A549 (cell line): ENCODE measurements at regions of chr6 and their contacts with region 1.

Region 1: GRCh38 chr6:44475779-44476434 is 88.4 kb downstream of the CDC5L start:
- DNase-seq: peak; percentile 67 to 76
- ATAC-seq: peak; percentile 89 to 98
- H3K4me3 ChIP-seq: no peak overlapping the region
- H3K27ac ChIP-seq: peak overlapping the region; percentile 57 to 85; a peak in 5 of 6 replicates
- H3K4me1 ChIP-seq: peaks cover 16% of the 10 kb centered on the region; the same call in 2 of the 3 replicates
- CTCF ChIP-seq: peak; percentile 82
- EP300 ChIP-seq: no peak
- POLR2A ChIP-seq: no peak
- RAD21 ChIP-seq: peak; percentile 92 to 95

Region 2: GRCh38 chr6:44464527-44465310 is 11.2 kb before region 1 on chr6:
- CTCF ChIA-PET with region 1: interaction called, 85 read pairs
- POLR2A ChIA-PET with region 1: no interaction called
- DNase-seq: no peak
- ATAC-seq: no peak
- H3K4me3 ChIP-seq: no peak overlapping the region
- H3K27ac ChIP-seq: no peak overlapping the region
- H3K4me1 ChIP-seq: no peaks in the 10 kb centered on the region
- CTCF ChIP-seq: no peak
- EP300 ChIP-seq: no peak
- POLR2A ChIP-seq: no peak
- RAD21 ChIP-seq: no peak

Region 3: GRCh38 chr6:44496665-44497369 is 20.9 kb after region 1 on chr6:
- CTCF ChIA-PET with region 1: interaction called, 22 read pairs
- POLR2A ChIA-PET with region 1: no interaction called
- DNase-seq: no peak
- ATAC-seq: no peak
- H3K4me3 ChIP-seq: no peak overlapping the region
- H3K27ac ChIP-seq: no peak overlapping the region
- H3K4me1 ChIP-seq: peaks cover 19% of the 10 kb centered on the region
- CTCF ChIP-seq: no peak
- EP300 ChIP-seq: no peak
- POLR2A ChIP-seq: no peak
- RAD21 ChIP-seq: no peak

Region 4: GRCh38 chr6:44630125-44631028 is 154.5 kb after region 1 on chr6:
- CTCF ChIA-PET with region 1: interaction called, 59 read pairs
- POLR2A ChIA-PET with region 1: no interaction called
- DNase-seq: peak; percentile 42 to 59
- ATAC-seq: peak; percentile 91 to 95
- H3K4me3 ChIP-seq: no peak overlapping the region
- H3K27ac ChIP-seq: no peak overlapping the region
- H3K4me1 ChIP-seq: no peaks in the 10 kb centered on the region
- CTCF ChIP-seq: peak; percentile 52
- EP300 ChIP-seq: no peak
- POLR2A ChIP-seq: no peak
- RAD21 ChIP-seq: peak; percentile 60 to 64

Region 5: DNA sequence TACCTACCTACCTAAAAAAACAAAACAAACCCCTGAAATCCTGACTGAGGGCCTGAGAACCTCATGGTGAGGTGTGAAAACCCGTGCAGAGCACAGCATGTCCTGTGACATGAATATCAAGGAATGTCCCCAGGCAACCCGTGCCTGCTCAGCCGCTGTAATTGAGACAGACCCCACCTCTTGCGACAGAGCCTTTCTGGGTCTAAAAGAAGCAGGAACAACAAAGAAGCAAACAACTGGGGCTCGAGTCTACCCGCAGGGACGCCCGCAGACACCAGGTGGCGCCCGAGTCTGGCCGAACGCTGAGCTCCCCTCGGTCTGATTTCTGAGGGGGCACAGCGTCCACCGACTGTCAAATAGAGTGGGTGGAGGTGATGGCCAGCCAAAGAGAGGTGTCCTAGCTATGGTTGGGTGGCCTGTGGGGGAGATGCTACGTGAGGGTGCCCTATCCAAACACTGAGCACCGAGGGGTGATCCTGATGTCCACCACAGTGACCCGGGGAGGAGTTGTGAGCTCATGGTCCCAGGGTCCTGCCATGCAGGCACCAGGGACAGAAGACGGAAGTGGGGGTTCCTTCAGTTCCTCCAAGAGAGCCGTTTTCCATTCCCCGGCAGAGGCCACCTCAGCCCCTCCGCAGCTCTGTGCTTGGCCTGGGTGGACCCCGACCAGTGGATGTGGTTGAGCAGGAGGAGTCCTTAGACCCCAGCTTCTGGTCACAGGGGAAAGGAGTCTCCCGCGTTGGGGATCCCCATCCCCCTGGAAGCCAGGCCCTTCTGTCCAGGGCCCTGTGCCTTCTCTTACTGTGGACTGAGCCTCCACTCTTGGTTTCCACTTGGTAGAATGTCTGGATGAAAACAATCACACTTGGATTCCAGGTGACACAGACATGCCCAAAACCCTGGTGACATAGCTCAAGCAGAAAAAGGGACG is 179.8 kb after region 1 on chr6:
- CTCF ChIA-PET with region 1: interaction called, 20 read pairs
- POLR2A ChIA-PET with region 1: no interaction called
- DNase-seq: peak; percentile 22 to 25
- ATAC-seq: peak; percentile 78 to 91
- H3K4me3 ChIP-seq: no peak overlapping the region
- H3K27ac ChIP-seq: peak overlapping the region in 1 of 2 experiments; percentile 55; a peak in 2 of 6 replicates
- H3K4me1 ChIP-seq: no peaks in the 10 kb centered on the region
- CTCF ChIP-seq: peak; percentile 70
- EP300 ChIP-seq: no peak
- POLR2A ChIP-seq: no peak
- RAD21 ChIP-seq: peak; percentile 85 to 91